ENCODE measurements at regions of chr22 and their contacts with region 1.

Region 1: GRCh38 chr22:27880778-27881394 is 38.2 kb downstream of the PITPNB start:
- DNase-seq: no peak
- H3K4me3 ChIP-seq: no peak overlapping the region
- H3K27ac ChIP-seq: no peak overlapping the region
- H3K4me1 ChIP-seq: peaks cover 7 to 12% (median 9%) of the 10 kb centered on the region in 4 experiments
- H3K27me3 ChIP-seq: no peaks in the 10 kb centered on the region
- CTCF ChIP-seq: peak in 2 of 3 experiments; percentile 51 to 71; a peak in 2 of 4 replicates
- EP300 ChIP-seq: no peak
- POLR2A ChIP-seq: no peak
- RAD21 ChIP-seq: peak; percentile 77 to 80

Region 2: GRCh38 chr22:27990879-27991278 is 110.0 kb after region 1 on chr22:
- CTCF ChIA-PET with region 1: interaction called, 38 read pairs
- POLR2A ChIA-PET with region 1: no interaction called
- DNase-seq: peak; percentile 61 to 83
- H3K4me3 ChIP-seq: no peak overlapping the region
- H3K27ac ChIP-seq: no peak overlapping the region
- H3K4me1 ChIP-seq: peaks cover 0 to 22% (median 18%) of the 10 kb centered on the region in 4 experiments; a peak in 6 of 7 replicates
- H3K27me3 ChIP-seq: peaks cover 0 to 2% (median 0%) of the 10 kb centered on the region in 4 experiments; a peak in 2 of 7 replicates
- CTCF ChIP-seq: peak; percentile 77 to 88 (median 87)
- EP300 ChIP-seq: 0 out of 3 replicates have a peak, but pooled peaks of 1 of the 2 experiments have one; percentile 51
- POLR2A ChIP-seq: no peak
- RAD21 ChIP-seq: peak; percentile 59 to 68

Region 3: GRCh38 chr22:28009272-28009827 is 128.5 kb after region 1 on chr22:
- CTCF ChIA-PET with region 1: interaction called, 84 read pairs
- POLR2A ChIA-PET with region 1: interaction called, 3 read pairs
- DNase-seq: peak; percentile 67 to 89
- H3K4me3 ChIP-seq: no peak overlapping the region
- H3K27ac ChIP-seq: no peak overlapping the region
- H3K4me1 ChIP-seq: no peaks in the 10 kb centered on the region; a peak in 1 of 7 replicates
- H3K27me3 ChIP-seq: no peaks in the 10 kb centered on the region
- CTCF ChIP-seq: peak; percentile 96 to 98 (median 97)
- EP300 ChIP-seq: no peak
- POLR2A ChIP-seq: no peak
- RAD21 ChIP-seq: peak; percentile 99